Mammary epithelial cell (primary cell): ENCODE measurements at regions of chr2 and their contacts with region 1.

Region 1: GRCh38 chr2:2296400-2296799 is 34.7 kb downstream of the MYT1L start:
- DNase-seq: no peak
- H3K4me3 ChIP-seq: no peak overlapping the region
- H3K27ac ChIP-seq: no peak overlapping the region
- H3K4me1 ChIP-seq: no peaks in the 10 kb centered on the region
- H3K27me3 ChIP-seq: no peaks in the 10 kb centered on the region
- CTCF ChIP-seq: no peak

Region 2: GRCh38 chr2:1497122-1497611 is 799.2 kb before region 1 on chr2:
- CTCF ChIA-PET with region 1: no interaction called
- dilution Hi-C with region 1: no loop called
- in situ Hi-C with region 1: no loop called
- intact Hi-C with region 1: no loop called
- DNase-seq: no peak
- H3K4me3 ChIP-seq: no peak overlapping the region
- H3K27ac ChIP-seq: no peak overlapping the region
- H3K4me1 ChIP-seq: no peaks in the 10 kb centered on the region
- H3K27me3 ChIP-seq: no peaks in the 10 kb centered on the region
- CTCF ChIP-seq: no peak

Region 3: DNA sequence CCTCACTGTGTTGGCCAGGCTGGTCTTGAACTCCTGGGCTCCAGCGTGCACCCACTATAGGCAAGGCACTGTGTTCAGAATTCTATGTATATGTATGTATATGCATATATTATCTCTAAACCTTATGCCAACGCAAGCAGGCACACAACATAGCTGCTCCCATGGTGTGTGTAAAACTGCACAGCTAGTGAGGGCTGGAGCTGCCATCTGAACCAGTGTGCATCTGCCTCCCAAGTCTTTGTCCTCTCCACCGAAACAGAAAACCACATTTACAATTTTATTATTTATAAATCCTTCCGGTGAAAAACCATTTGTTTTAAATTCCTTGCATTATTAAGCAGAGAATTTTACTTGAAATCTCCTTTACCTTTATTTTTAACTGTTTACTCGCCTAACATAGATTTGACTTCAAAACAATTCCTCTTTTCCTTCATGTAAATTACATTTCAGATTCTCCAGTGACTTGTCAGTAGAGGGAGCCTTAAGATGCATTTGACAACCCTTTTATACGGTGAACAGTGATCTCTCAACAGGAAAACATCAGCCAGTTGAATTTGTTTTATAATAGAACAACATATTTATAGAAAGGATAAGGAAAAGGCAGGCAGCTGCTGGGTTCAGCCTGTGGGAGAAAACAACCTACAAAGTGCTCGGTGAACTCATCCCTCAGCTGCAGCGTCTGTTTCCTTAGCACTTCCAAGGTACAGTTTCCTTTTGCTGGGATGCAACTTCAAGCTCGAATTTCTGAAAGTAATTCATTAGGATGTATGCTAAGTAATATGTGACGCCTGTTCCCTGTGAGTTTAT is 66.6 kb before region 1 on chr2:
- CTCF ChIA-PET with region 1: no interaction called
- dilution Hi-C with region 1: loop called (anchors 5 kb)
- in situ Hi-C with region 1: no loop called
- intact Hi-C with region 1: no loop called
- DNase-seq: no peak
- H3K4me3 ChIP-seq: no peak overlapping the region
- H3K27ac ChIP-seq: no peak overlapping the region
- H3K4me1 ChIP-seq: no peaks in the 10 kb centered on the region
- H3K27me3 ChIP-seq: no peaks in the 10 kb centered on the region
- CTCF ChIP-seq: no peak

Region 4: DNA sequence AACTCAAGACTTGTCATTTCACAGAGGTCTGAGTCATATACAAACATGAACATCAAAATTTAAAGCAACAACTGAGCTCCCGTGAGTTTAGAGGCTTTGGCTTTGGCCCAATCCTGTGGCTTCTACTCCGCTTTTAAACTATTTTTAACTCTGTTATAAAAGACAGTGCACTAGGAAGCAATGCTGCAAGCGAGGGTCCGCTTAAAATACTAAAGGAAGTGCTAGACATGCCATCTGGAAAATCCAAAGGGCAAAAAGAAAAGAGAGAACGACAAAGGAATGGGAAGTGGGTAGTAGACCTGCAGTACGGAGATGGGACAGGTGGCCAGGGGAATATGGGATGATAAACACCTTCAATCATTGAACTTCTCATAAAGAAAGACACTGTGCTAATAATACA is 72.1 kb after region 1 on chr2:
- CTCF ChIA-PET with region 1: no interaction called
- dilution Hi-C with region 1: loop called (anchors 5 kb)
- in situ Hi-C with region 1: no loop called
- intact Hi-C with region 1: no loop called
- DNase-seq: no peak
- H3K4me3 ChIP-seq: no peak overlapping the region
- H3K27ac ChIP-seq: no peak overlapping the region
- H3K4me1 ChIP-seq: no peaks in the 10 kb centered on the region
- H3K27me3 ChIP-seq: no peaks in the 10 kb centered on the region
- CTCF ChIP-seq: no peak